Cardiac septum (tissue), 1 donor: ENCODE measurements at regions of chr12 and their contacts with region 1.

Region 1: DNA sequence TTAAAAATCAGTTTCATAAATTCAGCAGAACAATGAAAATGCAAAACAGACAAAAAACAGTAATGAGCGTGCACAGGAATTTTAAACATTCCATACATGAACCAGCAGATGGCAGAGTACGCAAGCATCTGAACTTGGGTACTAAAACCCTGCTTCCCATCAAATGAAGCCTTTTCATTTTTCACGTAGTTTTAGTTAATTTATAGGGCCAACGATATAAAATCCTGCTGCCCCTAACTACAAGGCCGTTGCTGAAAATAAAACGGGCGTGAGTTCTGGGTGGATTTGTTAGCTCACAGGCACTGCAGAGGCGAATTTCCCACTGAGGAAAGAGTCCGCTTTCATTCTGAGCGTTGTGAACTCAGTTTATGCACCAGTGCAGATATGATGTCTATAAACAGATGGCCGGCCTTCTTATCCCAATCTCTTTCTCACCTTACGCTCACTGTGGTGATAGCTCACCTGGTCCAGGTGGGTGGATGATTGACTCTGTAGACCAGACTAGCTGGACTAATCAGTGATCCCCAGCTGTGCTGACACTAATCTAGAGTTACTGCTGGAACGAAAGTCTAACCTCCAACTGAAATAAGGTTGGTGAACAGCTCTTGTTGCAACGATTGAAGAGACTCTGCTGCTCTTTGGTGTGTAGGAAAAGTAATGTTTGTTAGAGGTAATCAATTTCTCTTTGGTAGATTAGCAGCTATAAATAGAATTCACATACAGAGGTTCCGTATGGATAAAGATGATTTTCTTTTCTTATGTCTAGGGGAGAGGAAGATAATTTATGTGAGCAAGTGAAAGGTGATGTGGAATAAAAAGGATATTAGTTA is 89.2 kb downstream of the PDZRN4 start:
- DNase-seq: no peak

Region 2: DNA sequence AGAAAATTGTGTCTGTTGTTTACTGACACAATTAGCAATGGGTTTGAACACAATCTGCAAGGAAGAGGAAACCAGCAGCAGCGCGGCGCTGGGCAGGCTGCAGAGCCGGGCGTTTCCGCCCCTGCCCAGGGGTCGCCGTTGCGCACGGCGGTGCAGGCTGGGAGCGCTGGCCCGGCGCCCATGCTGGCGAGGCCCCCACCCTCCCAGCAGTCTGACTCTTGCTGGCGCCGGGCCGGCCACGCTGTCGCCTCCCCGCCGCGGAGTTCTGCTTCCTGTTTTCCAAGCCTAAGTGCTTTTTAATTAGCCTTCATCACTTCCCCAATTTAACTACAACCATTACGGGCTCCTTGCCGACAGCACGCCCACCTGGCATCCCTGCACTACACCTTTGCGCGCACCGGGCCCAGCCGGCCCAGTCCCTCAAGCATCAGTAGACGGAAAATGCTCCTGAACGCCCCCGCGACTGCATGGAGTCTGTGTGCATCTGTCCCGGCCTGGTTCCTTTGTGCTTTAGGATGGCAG is 655.2 kb after region 1 on chr12:
- intact Hi-C with region 1: loop called (anchors 5 kb)
- DNase-seq: peak; percentile 93

Region 3: DNA sequence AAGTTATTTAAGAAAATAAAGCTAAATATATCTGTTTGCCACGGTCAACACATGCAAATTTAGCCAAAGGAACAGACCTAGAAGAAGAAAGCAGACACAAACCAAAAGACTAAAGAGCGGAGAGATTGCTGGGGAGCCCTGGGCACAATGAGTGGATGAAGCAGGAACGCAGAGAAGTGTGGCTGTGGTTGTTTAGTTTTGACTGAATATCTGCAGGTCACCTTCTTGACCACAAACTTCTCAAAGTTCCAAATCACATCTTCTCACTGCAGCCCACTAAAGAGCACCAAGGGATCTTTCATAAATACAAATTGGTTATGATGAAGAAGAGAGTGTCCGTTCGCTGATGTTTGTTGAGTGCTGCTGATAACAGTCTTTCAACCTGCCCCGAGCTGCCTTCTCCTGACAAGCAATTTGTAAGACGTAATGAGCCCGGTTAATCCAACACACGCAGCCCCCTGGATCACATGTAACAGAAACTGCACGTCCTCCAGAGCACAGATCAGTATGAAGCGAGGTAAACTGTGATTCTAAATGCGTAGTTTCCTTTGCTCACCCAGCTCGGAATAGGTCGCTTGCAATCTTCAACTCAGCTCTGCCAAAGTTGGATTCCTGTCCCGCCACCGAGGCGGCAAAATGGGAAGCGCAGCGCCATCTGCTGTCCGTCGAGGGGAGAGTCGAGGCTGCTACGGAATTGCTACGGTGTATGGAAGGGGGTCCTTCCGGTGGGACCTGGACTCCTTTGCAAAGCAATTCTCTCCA is 746.6 kb after region 1 on chr12:
- intact Hi-C with region 1: loop called (anchors 5 kb)
- DNase-seq: peak; percentile 91

Region 4: GRCh38 chr12:42104784-42105183 is 827.5 kb after region 1 on chr12:
- intact Hi-C with region 1: loop called (anchors 5 kb)
- DNase-seq: no peak